ENCODE measurements at regions of chr1 and their contacts with region 1.

Region 1: GRCh38 chr1:218377143-218377660 is 32.1 kb downstream of the TGFB2 start:
- DNase-seq: peak; percentile 85
- ATAC-seq: peak; percentile 92
- H3K4me3 Mint-ChIP-seq: no peak overlapping the region
- H3K27ac Mint-ChIP-seq: peak overlapping the region; percentile 57
- H3K4me1 Mint-ChIP-seq: peaks cover 14% of the 10 kb centered on the region
- H3K27me3 Mint-ChIP-seq: peaks cover 47% of the 10 kb centered on the region
- CTCF ChIP-seq: no peak

Region 2: DNA sequence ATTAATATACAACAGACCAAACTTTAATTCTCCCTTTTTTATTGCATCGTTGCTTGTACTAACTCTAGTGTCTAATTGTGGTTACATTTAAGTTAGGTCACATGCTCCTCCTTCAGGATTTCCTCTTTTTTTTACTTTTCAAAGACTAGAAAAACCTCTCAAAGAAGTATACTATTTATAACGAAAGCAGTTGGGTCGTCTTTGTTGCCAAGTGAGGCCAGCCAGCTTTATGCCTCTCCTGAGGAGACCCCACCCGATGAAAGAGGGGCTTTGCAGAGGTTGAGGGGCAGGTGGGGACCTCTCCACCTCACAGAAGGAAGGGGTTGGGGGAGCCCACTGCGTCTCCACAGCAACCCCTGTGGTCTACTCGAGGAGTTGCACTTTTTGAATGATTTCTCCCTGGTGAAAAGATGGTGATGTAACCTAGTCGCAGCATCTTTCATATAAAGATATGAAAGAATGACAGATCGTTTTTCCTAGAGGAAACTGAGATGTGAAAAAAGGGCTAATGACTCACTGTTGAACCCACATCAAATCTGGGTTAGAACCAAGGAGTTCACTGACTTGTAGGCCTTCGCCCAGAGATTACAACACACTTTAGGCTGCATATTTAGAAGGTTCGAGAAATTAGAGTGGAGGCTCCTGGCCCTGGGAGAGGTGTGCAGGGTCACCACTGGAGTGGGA is 25.7 kb before region 1 on chr1:
- CTCF ChIA-PET with region 1: no interaction called
- POLR2A ChIA-PET with region 1: interaction called, 3 read pairs
- intact Hi-C with region 1: loop called (anchors 1 kb)
- DNase-seq: peak; percentile 49
- ATAC-seq: peak; percentile 96
- H3K4me3 Mint-ChIP-seq: peak overlapping the region; percentile 65
- H3K27ac Mint-ChIP-seq: no peak overlapping the region
- H3K4me1 Mint-ChIP-seq: peaks cover 29% of the 10 kb centered on the region
- H3K27me3 Mint-ChIP-seq: peaks cover 30% of the 10 kb centered on the region
- CTCF ChIP-seq: peak; percentile 64